OCI-LY7 (cell line): ENCODE measurements at regions of chr11 and their contacts with region 1.

Region 1: GRCh38 chr11:96342961-96343711 is at the start of gene MAML2:
- DNase-seq: peak; percentile 92
- H3K4me3 ChIP-seq: peak within 1 kb of the TSS; percentile 68
- H3K27ac ChIP-seq: no peak within 1 kb of the TSS
- H3K4me1 ChIP-seq: peaks cover 39% of the 10 kb centered on the region
- CTCF ChIP-seq: peak; percentile 74
- total RNA-seq, gene MAML2: 0.54 and 1.0 TPM in 2 replicates

Region 2: GRCh38 chr11:96012086-96012824 is 330.9 kb before region 1 on chr11:
- CTCF ChIA-PET with region 1: interaction called, 3 read pairs
- POLR2A ChIA-PET with region 1: interaction called, 3 read pairs
- intact Hi-C with region 1: loop called (anchors 1 kb)
- DNase-seq: peak; percentile 88
- H3K4me3 ChIP-seq: peak overlapping the region; percentile 29
- H3K27ac ChIP-seq: peak overlapping the region; percentile 66
- H3K4me1 ChIP-seq: peaks cover 36% of the 10 kb centered on the region
- CTCF ChIP-seq: peak; percentile 86

Region 3: DNA sequence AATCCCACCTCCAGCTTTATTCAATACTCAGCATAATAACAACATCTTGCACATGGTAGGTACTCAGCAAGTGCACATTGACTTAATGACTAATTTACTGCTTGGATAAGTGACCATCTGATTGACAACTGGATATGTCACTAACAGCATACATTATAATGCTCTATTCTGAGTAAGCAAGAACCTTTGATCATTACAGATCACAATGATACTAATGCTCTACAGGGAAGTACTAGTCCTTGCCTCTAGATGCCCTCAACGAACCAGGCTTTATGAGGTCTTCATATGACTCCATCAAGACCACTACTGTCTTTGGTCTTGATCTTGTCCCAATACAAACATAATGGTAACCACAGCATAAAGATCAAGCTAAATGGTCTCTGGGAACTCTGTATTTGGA is 251.7 kb before region 1 on chr11:
- CTCF ChIA-PET with region 1: interaction called, 6 read pairs
- POLR2A ChIA-PET with region 1: interaction called, 7 read pairs
- intact Hi-C with region 1: loop called (anchors 1 kb)
- DNase-seq: peak; percentile 64
- H3K4me3 ChIP-seq: no peak overlapping the region
- H3K27ac ChIP-seq: no peak overlapping the region
- H3K4me1 ChIP-seq: no peaks in the 10 kb centered on the region
- CTCF ChIP-seq: peak; percentile 69

Region 4: DNA sequence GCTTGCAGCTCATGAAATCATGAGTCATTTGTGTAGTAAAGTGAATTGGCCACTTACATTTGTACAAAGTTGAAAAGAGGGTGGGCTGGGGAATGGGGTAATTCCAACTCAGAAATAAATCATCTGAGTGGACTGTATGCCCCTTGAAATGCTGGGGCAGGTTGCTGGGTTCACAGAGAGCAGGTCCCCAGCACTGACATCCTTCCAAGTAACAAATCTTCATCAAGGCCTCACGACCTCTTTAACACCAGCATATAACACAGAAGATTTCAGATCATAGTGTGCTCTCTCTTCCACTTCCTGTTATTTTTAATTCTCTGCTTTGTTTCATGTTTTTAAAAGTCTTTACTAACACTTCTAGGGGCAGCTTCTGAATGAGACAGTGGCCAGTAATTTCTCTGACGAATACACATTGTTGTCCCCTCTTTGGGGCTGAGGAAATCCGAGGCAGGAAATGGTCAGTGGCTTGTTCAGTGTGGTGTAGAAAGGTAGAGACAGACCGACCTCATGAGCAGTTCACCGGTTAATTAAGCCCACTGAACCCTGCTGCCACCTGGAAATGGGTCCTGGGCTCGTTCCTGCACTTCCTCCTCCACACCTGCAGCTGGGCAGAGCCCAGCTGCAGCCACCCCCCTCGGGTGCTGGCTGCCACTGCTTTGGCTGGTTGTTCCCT is 127.9 kb before region 1 on chr11:
- CTCF ChIA-PET with region 1: interaction called, 6 read pairs
- POLR2A ChIA-PET with region 1: interaction called, 3 read pairs
- intact Hi-C with region 1: loop called (anchors 1 kb)
- DNase-seq: peak; percentile 93
- H3K4me3 ChIP-seq: peak overlapping the region; percentile 36
- H3K27ac ChIP-seq: peak overlapping the region; percentile 88
- H3K4me1 ChIP-seq: peaks cover 76% of the 10 kb centered on the region
- CTCF ChIP-seq: no peak

Region 5: DNA sequence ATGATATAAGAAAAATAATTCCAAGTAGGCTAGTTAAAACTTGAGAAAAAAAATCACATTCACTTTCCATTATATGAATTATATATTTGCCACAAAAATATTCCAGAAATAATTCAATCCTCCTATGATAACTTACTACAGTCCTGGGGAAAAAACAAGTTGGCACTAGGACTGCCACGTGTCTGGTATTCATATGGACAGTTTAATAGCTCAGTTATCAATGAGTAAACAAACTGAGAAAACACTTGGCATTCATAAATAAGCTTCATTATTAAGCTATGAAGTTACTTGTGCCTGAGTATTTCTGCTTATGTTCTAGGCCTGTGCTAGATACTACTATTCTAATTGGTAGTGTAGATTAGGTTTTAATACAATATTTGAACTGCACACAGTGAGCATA is 22.4 kb after region 1 on chr11:
- CTCF ChIA-PET with region 1: interaction called, 3 read pairs
- POLR2A ChIA-PET with region 1: interaction called, 3 read pairs
- intact Hi-C with region 1: loop called (anchors 1 kb)
- DNase-seq: no peak
- H3K4me3 ChIP-seq: no peak overlapping the region
- H3K27ac ChIP-seq: no peak overlapping the region
- H3K4me1 ChIP-seq: no peaks in the 10 kb centered on the region
- CTCF ChIP-seq: no peak

Region 6: GRCh38 chr11:96412761-96413381 is 69.7 kb after region 1 on chr11:
- CTCF ChIA-PET with region 1: no interaction called
- POLR2A ChIA-PET with region 1: no interaction called
- intact Hi-C with region 1: no loop called
- DNase-seq: no peak
- H3K4me3 ChIP-seq: no peak overlapping the region
- H3K27ac ChIP-seq: no peak overlapping the region
- H3K4me1 ChIP-seq: no peaks in the 10 kb centered on the region
- CTCF ChIP-seq: no peak